Body of pancreas (tissue), 4 donors: ENCODE measurements at regions of chr11 and their contacts with region 1.

Region 1: DNA sequence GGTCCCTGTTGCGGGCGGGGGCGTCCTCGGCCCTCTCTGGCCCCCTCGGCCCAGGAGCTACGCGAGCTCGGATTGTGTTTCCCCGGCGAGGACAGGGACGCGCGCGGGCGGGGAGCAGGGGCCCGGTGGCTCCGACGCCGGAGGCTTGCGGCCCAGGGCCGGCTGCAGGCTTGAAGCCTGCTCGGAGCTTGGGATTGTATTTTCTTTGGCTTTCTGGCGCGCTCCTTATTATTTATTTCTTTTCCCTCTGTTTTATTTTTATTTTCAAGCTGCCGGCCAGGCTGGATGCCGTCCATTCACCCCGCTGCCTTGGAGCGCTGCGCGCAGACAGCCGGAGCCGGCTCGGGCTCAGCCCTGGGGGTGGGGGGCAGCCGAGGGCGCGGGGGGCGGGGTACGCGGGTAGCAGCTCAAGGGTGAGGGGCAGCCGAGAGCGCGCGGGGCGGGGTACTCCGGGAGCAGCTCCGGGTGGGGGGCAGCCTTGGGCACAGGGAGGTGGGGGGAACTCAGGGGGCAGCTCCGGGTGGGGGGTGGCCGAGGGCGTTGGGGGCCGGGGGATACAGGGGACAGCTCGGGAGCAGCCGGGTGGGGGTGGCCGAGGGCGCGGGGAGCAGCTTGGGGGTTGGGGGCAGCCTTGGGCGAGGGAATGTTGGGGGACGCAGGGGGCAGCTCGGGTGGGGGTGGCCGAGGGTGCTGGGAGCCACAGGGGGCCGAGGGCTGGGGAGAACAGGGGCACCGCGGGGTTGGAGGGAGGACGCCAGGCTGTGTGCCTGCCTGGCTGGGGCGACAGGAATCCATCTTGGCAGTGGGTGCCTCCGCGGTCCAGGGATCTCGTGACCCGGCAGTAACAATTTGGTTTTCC is 42.7 kb downstream of the KCNJ1 start:
- DNase-seq: no peak
- ATAC-seq: no peak
- H3K4me3 ChIP-seq: no peak overlapping the region
- H3K27ac ChIP-seq: no peak overlapping the region
- H3K4me1 ChIP-seq: peaks cover 3% of the 10 kb centered on the region
- H3K27me3 ChIP-seq: no peaks in the 10 kb centered on the region
- CTCF ChIP-seq: no peak
- POLR2A ChIP-seq: no peak

Region 2: GRCh38 chr11:128172046-128172878 is 652.2 kb before region 1 on chr11:
- intact Hi-C with region 1: loop called (anchors 10 kb)
- DNase-seq: peak; percentile 80 to 87 (median 84)
- ATAC-seq: peak; percentile 78
- H3K4me3 ChIP-seq: no peak overlapping the region
- H3K27ac ChIP-seq: no peak overlapping the region
- H3K4me1 ChIP-seq: no peaks in the 10 kb centered on the region
- H3K27me3 ChIP-seq: no peaks in the 10 kb centered on the region
- CTCF ChIP-seq: peak; percentile 39 to 83 (median 79)
- POLR2A ChIP-seq: no peak

Region 3: DNA sequence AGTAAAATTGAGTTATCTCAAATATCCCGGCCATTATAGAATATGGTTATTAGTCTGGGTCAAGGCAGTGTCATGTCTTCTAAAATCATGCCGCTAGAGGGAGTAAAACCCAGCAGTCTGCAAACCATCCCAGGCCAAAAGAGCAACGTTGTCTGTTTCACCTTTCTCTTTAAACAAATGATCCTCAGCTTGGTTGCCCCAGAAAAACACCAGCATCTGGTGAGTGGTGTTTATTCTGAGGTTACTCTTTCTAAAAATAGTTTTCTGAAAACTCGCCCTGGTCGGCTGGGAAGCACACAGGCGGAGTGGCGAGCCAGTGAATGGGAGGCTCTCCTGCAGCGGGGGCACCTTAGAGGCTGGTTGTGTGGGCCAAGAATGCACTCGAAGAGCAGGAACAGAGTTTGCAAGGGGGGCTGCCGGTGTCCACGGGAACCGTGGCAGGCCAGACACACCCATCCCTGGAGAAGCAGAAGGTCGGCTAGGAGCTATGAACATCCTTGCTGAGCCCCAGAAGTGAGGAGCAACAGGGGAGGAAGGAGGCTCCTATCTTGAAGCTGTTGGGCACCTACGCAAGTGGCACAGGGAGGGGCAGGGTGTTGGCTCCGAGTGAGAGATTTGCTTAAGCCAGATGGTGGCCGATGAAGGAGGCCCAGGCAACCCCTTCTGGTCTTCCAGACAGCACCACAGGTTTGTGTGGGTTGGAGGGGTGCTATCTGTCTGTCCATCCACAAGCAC is 534.1 kb before region 1 on chr11:
- intact Hi-C with region 1: loop called (anchors 10 kb)
- DNase-seq: peak; percentile 58 to 75 (median 62)
- ATAC-seq: peak; percentile 86
- H3K4me3 ChIP-seq: no peak overlapping the region
- H3K27ac ChIP-seq: peak overlapping the region in 3 of 4 donors; percentile 18 to 40 (median 29)
- H3K4me1 ChIP-seq: no peaks in the 10 kb centered on the region
- H3K27me3 ChIP-seq: no peaks in the 10 kb centered on the region
- CTCF ChIP-seq: peak; percentile 66 to 89 (median 83)
- POLR2A ChIP-seq: peak in 1 of 3 donors; percentile 13

Region 4: GRCh38 chr11:128630367-128631230 is 193.8 kb before region 1 on chr11:
- intact Hi-C with region 1: loop called (anchors 10 kb)
- DNase-seq: peak; percentile 84 to 89 (median 86)
- ATAC-seq: peak; percentile 88
- H3K4me3 ChIP-seq: no peak overlapping the region
- H3K27ac ChIP-seq: no peak overlapping the region
- H3K4me1 ChIP-seq: peaks cover 12% of the 10 kb centered on the region
- H3K27me3 ChIP-seq: no peaks in the 10 kb centered on the region
- CTCF ChIP-seq: peak; percentile 66 to 94 (median 91)
- POLR2A ChIP-seq: no peak

Region 5: DNA sequence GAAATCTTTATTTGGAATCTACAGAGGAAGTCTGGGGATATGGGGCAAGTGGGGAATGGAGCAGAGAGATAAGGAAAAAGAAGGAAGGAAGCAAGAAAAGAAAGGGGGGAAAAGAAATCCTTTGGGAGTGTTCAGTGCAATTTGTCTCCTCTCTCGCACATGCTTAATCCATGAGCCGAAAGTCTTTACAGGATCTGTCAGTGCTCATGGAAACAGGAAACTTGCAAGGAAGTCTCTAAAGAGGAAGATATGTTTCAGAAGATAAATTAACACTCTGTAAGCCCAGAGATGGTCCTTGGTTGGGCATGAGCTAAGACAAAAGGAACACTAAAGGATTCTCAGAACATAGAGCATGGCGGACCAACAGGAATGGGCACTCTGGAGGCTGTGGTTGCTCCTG is 178.5 kb before region 1 on chr11:
- intact Hi-C with region 1: no loop called
- DNase-seq: no peak
- ATAC-seq: no peak
- H3K4me3 ChIP-seq: no peak overlapping the region
- H3K27ac ChIP-seq: no peak overlapping the region
- H3K4me1 ChIP-seq: no peaks in the 10 kb centered on the region
- H3K27me3 ChIP-seq: no peaks in the 10 kb centered on the region
- CTCF ChIP-seq: no peak
- POLR2A ChIP-seq: no peak